ENCODE measurements at regions of chr1 and their contacts with region 1.

Region 1: GRCh38 chr1:28162151-28162550 is 14.3 kb downstream of the PTAFR start:
- DNase-seq: no peak
- ATAC-seq: no peak
- H3K4me3 ChIP-seq: no peak overlapping the region
- H3K4me3 Mint-ChIP-seq: no peak overlapping the region
- H3K27ac ChIP-seq: no peak overlapping the region
- H3K27ac Mint-ChIP-seq: no peak overlapping the region
- H3K4me1 ChIP-seq: no peaks in the 10 kb centered on the region
- H3K4me1 Mint-ChIP-seq: peaks cover 8% of the 10 kb centered on the region
- H3K27me3 ChIP-seq: no peaks in the 10 kb centered on the region
- H3K27me3 Mint-ChIP-seq: no peaks in the 10 kb centered on the region
- CTCF ChIP-seq: no peak

Region 2: GRCh38 chr1:27864264-27864895 is 297.8 kb before region 1 on chr1:
- CTCF ChIA-PET with region 1: no interaction called
- POLR2A ChIA-PET with region 1: interaction called, 10 read pairs
- intact Hi-C with region 1: no loop called
- DNase-seq: peak; percentile 60
- ATAC-seq: peak; percentile 14
- H3K4me3 ChIP-seq: peak overlapping the region in 1 of 5 experiments; percentile 19
- H3K4me3 Mint-ChIP-seq: peak overlapping the region; percentile 73
- H3K27ac ChIP-seq: peak overlapping the region; percentile 46 to 74
- H3K27ac Mint-ChIP-seq: peak overlapping the region; percentile 93
- H3K4me1 ChIP-seq: peaks cover 40 to 53% of the 10 kb centered on the region in 2 donors
- H3K4me1 Mint-ChIP-seq: peaks cover 55% of the 10 kb centered on the region
- H3K27me3 ChIP-seq: peaks cover 0 to under 1% (median 0%) of the 10 kb centered on the region in 4 experiments
- H3K27me3 Mint-ChIP-seq: no peaks in the 10 kb centered on the region
- CTCF ChIP-seq: no peak

Measured in B cell (primary cell).